Astrocyte of the spinal cord (primary cell): ENCODE measurements at regions of chr15 and their contacts with region 1.

Region 1: GRCh38 chr15:88904624-88905327 is 8.4 kb downstream of the MFGE8 start:
- DNase-seq: peak; percentile 72
- H3K4me3 ChIP-seq: no peak overlapping the region
- CTCF ChIP-seq: peak; percentile 99

Region 2: DNA sequence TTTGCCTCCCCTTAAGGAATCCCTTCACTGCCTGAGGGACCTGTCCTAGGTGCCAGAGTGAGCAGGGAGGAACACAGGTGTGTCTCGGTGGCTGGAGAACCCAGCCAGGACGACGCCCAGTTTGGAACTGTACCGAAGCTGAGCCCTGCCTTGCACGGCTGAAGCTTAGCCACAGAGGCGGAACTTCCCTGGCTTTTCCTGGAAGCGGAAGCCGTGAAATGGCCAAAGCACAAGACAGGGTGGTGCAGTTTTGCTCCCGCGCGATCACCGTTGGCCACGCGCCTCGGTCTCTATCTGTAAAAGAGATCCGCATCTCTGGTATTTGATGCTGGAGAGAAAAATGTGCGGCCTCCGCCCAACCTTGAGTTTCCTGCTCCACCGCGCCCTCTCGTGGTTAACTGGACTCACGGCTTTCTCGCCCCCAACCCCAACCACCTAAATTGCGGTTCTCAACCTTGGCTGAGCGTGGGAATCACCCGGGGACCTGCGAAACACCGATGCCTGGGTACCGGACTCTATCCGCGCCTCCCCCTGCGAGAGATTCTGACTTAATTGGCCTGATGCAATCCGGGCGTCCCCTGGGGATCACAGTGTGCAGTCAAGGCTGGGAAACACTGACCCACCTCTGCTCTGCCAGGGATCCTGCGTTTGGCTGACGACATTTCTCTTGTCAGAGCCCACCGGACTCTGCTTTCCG is 112.7 kb after region 1 on chr15:
- in situ Hi-C with region 1: loop called (anchors 25 kb)
- DNase-seq: peak; percentile 70
- H3K4me3 ChIP-seq: peak overlapping the region; percentile 36
- CTCF ChIP-seq: peak; percentile 92

Region 3: DNA sequence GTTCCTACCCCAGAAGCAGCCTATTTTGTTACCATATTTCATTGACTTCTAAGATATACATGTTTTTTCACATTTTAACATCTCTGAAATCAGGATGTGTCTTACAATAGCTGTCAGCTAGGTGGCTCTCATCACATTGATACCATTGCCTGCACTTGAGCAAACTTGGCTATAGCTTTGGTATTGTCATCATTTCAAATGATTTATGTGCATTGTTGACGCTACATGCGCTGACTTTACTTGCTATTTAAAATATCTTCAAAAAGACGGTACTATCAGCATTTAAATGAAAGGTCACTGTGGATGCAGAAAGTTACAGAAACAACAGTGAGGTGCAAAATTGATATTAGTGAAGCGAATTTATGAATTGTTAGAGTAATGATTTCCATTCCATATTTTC is 129.5 kb after region 1 on chr15:
- in situ Hi-C with region 1: no loop called
- DNase-seq: peak; percentile 23
- H3K4me3 ChIP-seq: no peak overlapping the region
- CTCF ChIP-seq: peak; percentile 46